Activated CD8-positive, alpha-beta T cell treated with anti-CD3 and anti-CD28 coated beads, Interleukin-2, amount 10 ng/mL, durations not matched to agents 7 days and 5 days (primary cell): ENCODE measurements at regions of chr13 and their contacts with region 1.

Region 1: GRCh38 chr13:30114571-30115256 is 192.6 kb downstream of the KATNAL1 start:
- DNase-seq: peak; percentile 94
- ATAC-seq: peak; percentile 96
- H3K4me3 Mint-ChIP-seq: peak overlapping the region; percentile 78
- H3K27ac Mint-ChIP-seq: peak overlapping the region; percentile 9
- H3K4me1 Mint-ChIP-seq: peaks cover 38% of the 10 kb centered on the region
- H3K27me3 Mint-ChIP-seq: peaks cover 8% of the 10 kb centered on the region

Region 2: DNA sequence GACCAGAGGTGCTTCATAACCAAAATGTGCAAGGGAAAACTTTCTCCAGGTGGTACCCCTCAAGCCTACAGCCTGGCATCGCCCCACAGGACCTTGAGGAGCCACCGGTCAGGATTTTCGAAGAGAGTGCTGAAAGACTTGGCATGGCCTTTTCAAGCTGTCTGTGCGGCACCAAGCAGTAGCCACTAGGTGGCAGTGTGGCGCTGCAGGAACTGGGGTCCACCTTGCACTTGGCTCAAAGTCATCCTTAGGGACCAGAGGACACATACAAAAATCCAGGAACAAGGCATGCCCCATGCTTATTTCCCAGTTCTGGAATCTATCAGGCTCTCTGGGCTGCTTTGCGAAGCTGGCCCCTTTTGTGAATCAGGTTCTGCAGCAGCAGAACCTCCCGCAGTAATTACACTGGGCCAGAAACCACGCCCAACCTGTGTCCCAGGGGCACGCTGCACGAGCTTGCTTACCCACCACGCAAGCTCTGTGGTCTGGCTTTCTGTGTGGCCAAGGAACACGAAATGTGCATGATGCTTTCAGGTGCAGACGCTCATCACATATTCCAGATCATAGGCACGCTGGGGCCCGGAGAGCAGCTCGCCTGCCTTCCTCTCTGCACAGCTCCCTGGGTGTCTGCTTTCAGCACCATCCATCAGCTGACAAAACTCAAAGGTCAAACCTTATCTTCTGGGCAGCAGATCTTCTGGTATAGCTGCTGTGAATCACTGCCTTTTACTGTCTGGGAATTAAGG is 606.4 kb before region 1 on chr13:
- CTCF ChIA-PET with region 1: interaction called, 35 read pairs
- POLR2A ChIA-PET with region 1: no interaction called
- DNase-seq: peak; percentile 78
- ATAC-seq: peak; percentile 79
- H3K4me3 Mint-ChIP-seq: no peak overlapping the region
- H3K27ac Mint-ChIP-seq: no peak overlapping the region
- H3K4me1 Mint-ChIP-seq: peaks cover 6% of the 10 kb centered on the region
- H3K27me3 Mint-ChIP-seq: no peaks in the 10 kb centered on the region

Region 3: DNA sequence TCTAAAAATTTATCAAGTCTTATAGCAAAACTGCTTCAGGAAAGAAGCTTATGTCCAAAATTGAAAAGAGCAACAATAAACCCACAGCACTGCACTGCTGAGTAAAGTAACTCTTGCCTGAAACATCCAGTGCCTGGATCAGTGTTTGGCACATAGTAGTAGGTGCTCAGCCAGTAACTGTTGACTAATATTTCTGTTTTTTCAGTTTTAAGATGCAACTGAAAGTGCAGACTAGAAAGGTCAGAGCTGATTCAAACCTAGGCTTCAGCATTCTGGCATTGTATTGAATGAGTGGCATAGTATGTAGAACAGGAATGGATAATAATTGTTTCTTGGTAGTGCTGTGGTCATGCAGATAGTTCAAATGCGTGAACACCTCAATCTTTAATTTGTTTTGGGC is 331.9 kb before region 1 on chr13:
- CTCF ChIA-PET with region 1: interaction called, 11 read pairs
- POLR2A ChIA-PET with region 1: no interaction called
- DNase-seq: no peak
- ATAC-seq: no peak
- H3K4me3 Mint-ChIP-seq: no peak overlapping the region
- H3K27ac Mint-ChIP-seq: no peak overlapping the region
- H3K4me1 Mint-ChIP-seq: no peaks in the 10 kb centered on the region
- H3K27me3 Mint-ChIP-seq: no peaks in the 10 kb centered on the region

Region 4: DNA sequence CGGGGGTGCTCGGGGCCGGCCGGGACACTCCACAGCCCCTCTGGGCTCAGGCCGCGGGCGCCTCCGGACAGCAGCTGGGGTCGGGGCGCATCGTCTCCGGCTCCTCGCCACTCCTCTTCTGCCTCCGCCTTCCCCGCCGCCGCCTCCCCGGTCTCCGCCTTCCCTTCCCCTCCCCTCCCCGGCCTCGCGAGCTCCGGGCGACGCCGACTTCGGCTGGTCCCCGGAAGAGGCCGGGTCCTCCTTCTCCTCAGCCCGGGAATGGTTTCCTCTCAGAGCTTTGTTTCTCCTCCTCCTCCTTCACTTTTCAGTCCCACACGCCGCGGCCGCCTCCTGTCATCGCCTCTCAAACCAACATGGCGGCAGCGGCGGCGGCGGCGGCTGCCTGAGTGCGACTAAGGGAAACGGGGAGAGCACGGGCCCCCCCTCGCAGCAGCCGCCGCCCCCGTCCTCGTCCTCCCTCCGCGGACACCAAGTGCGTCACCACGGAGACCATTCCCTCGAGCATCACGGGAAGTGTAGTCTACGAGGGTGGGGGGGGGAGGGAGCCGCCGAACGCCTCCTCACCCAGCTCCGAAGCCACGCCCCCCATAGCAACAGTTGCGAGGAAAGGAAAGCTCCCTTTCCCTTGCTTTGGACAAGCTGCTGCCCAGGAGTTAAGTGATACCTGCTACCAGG is 264.4 kb before region 1 on chr13 and contains the start of gene UBL3:
- CTCF ChIA-PET with region 1: interaction called, 232 read pairs
- POLR2A ChIA-PET with region 1: interaction called, 10 read pairs
- DNase-seq: peak; percentile 96
- ATAC-seq: peak; percentile 89
- H3K4me3 Mint-ChIP-seq: peak within 1 kb of the TSS; percentile 86
- H3K27ac Mint-ChIP-seq: peak within 1 kb of the TSS; percentile 99
- H3K4me1 Mint-ChIP-seq: peaks cover 35% of the 10 kb centered on the region
- H3K27me3 Mint-ChIP-seq: no peaks in the 10 kb centered on the region
- total RNA-seq, gene UBL3: 7.3 to 8.4 TPM

Region 5: GRCh38 chr13:29954082-29955028 is 160.4 kb before region 1 on chr13:
- CTCF ChIA-PET with region 1: interaction called, 10 read pairs
- POLR2A ChIA-PET with region 1: no interaction called
- DNase-seq: peak; percentile 75
- ATAC-seq: peak; percentile 96
- H3K4me3 Mint-ChIP-seq: peak overlapping the region; percentile 69
- H3K27ac Mint-ChIP-seq: peak overlapping the region; percentile 88
- H3K4me1 Mint-ChIP-seq: peaks cover 52% of the 10 kb centered on the region
- H3K27me3 Mint-ChIP-seq: peaks cover 2% of the 10 kb centered on the region

Region 6: DNA sequence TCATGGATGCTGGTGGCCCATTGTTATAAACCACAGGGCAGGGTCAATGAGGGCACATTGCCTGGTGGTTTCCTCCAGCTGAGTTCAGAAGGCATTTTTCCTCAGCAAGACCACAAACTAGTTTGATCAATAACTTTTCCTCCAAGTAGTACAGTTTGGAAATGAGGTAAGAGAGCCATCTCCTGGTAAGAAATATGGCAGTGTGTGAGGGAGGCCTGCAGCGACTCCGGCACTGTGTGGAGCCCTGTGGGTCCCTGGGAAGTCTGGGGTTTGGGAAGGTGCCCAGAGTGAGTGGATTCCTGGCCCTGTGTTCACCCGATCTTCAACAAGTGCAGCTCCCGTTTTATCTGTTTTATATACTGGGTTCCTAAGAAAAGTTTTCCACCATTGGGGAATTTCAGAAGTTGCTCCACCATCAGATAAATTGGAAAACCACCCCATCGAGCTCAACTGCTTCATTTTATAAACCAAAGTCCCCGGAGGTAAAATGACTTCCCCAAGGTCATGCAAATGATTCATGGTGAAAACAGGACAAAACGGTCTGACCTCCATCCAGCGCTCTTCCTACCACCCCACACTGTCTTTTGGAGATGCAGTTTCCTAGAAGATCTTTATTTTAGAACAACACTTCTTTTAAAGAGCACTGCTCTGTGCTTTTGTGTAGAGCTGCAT is 44.2 kb after region 1 on chr13:
- CTCF ChIA-PET with region 1: interaction called, 29 read pairs
- POLR2A ChIA-PET with region 1: no interaction called
- DNase-seq: no peak
- ATAC-seq: peak; percentile 58
- H3K4me3 Mint-ChIP-seq: no peak overlapping the region
- H3K27ac Mint-ChIP-seq: no peak overlapping the region
- H3K4me1 Mint-ChIP-seq: peaks cover 21% of the 10 kb centered on the region
- H3K27me3 Mint-ChIP-seq: peaks cover 3% of the 10 kb centered on the region

Region 7: GRCh38 chr13:30408319-30409101 is 293.8 kb after region 1 on chr13:
- CTCF ChIA-PET with region 1: no interaction called
- POLR2A ChIA-PET with region 1: no interaction called
- DNase-seq: peak; percentile 93
- ATAC-seq: peak; percentile 97
- H3K4me3 Mint-ChIP-seq: peak overlapping the region; percentile 52
- H3K27ac Mint-ChIP-seq: peak overlapping the region; percentile 55
- H3K4me1 Mint-ChIP-seq: peaks cover 27% of the 10 kb centered on the region
- H3K27me3 Mint-ChIP-seq: peaks cover 10% of the 10 kb centered on the region